A673 (cell line): ENCODE measurements at regions of chr7 and their contacts with region 1.

Region 1: GRCh38 chr7:101828301-101829020 is 11.0 kb downstream of the CUX1 start:
- DNase-seq: no peak
- H3K4me3 ChIP-seq: no peak overlapping the region
- H3K27ac ChIP-seq: no peak overlapping the region
- H3K4me1 ChIP-seq: peaks cover 6% of the 10 kb centered on the region
- H3K27me3 ChIP-seq: no peaks in the 10 kb centered on the region
- CTCF ChIP-seq: no peak

Region 2: DNA sequence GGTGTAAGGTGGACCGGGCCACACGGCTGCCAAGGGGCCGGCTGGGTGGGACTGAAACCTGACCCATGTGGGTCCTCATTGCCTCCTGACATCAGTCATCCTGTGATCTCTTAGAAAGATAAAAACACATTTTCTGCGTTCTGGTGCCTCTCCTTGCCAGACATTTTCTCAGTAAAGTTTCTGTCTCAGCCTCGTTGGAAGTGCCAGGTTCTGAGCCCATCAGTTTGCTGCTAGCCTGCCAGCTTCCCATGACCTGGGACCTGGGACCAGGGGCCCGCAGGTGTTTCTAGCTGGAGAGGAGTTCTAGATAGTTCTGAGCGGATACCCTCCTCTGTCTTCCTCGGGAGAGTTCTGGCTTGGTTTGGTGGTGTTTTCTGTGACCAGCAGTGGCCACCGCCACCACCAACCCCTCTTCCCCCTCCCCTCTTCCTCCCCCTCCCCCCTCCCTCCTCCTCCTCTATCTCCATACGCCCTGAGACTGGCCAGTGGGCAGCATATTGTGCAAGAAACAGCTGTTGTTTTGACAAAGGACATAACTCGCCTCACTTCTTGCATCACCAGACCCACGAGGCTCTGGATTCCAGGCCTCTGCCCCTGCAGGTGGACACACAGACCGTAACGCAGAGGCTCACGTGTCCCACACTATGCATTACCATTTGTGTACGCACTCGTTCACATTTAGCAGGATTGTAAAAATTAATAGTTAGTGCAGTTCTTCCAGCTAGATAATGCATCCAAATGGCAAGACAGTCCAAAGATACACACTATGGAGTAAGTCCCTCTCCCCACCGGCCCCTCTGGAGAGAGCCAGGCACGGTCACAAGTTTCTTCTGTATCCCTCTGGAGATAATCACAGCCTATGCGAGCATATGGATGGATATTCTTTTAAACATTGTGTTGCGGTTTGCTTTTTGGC is 83.6 kb after region 1 on chr7:
- CTCF ChIA-PET with region 1: no interaction called
- POLR2A ChIA-PET with region 1: interaction called, 15 read pairs
- intact Hi-C with region 1: no loop called
- DNase-seq: no peak
- H3K4me3 ChIP-seq: no peak overlapping the region
- H3K27ac ChIP-seq: no peak overlapping the region
- H3K4me1 ChIP-seq: no peaks in the 10 kb centered on the region
- H3K27me3 ChIP-seq: no peaks in the 10 kb centered on the region
- CTCF ChIP-seq: no peak